ENCODE measurements at regions of chr18 and their contacts with region 1.

Region 1: DNA sequence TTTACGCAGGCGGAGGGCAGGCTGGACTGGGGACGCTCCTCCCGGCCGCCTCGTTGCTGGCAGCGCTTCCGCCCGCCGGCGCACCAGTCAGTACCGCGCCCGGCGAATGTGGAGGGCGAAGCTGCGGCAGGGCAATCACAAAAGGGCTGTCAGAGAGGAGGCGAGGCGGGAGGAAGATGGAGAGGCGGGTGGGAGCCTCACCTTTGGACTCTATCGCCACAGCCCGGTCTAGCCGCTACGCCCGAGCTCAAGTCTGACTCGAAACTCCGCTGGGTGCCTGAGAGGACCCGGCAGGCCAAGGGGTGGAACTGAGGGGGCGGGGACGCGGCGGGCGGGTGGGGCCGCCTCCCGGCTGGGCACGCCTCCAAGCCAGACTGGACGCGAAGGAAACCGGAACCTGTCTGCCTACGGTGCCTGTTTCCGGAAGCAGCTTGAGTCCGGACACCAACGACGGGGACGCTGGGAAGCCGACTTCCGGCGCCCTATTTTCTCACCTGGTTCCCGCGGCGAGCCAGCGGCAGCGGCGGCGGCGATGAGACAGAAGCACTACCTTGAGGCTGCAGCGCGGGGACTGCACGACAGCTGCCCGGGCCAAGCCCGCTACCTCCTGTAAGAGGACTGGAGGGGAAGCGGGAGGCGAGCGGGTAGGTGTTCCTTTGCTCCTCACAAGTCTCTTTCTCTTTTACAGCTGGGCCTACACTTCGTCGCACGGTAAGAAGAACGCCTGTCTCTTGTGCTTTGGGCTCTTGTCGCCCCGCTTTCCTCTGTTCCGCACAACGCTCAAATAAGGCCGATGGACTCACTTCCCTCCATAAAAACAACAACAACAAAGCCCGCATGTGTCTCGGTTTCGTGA is at the start of gene RMP24:
- DNase-seq: peak; percentile 95
- H3K4me3 ChIP-seq: peak within 1 kb of the TSS; percentile 58 to 80 (median 73)
- H3K27ac ChIP-seq: peak within 1 kb of the TSS; percentile 79
- H3K4me1 ChIP-seq: peaks cover 44% of the 10 kb centered on the region
- H3K27me3 ChIP-seq: no peaks in the 10 kb centered on the region
- CTCF ChIP-seq: no peak

Region 2: DNA sequence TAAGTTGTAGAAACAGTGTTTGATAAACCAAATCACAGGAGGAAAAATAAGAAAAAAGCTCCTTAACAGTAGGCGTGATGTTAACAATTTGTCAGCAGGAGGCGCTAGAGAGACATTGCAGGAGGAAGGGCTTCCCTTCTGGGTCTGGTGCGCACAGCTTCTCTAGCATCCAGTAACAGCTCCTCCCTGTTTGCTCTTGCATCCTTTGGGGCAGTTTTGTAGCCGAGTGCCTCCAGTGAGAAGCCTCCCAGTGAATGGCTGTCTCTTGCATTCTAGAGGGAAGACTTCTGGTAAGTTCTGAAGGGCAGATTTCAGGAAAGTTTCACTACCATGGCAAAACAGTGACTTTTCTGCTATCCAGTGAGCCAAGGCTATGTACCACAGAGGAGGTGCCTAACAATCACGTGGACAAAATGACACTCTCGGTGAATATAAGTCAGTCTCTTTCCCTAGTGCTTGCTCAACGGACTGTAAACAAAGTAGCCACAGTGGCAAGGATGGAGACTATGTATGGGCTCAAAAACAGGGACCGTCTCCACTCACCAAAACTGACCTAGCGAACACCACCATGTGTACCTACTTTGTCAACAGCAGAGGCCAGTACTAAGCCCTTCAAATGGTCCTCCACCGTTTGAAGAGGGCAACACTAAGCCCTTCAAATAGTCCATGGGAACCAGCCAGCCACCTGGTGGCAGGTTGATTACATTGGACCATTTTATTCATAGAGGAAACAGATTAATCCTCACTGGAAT is 585.6 kb before region 1 on chr18:
- CTCF ChIA-PET with region 1: no interaction called
- dilution Hi-C with region 1: no loop called
- in situ Hi-C with region 1: no loop called
- intact Hi-C with region 1: loop called (anchors 5 kb)
- DNase-seq: peak; percentile 61
- H3K4me3 ChIP-seq: no peak overlapping the region
- H3K27ac ChIP-seq: no peak overlapping the region
- H3K4me1 ChIP-seq: no peaks in the 10 kb centered on the region
- H3K27me3 ChIP-seq: no peaks in the 10 kb centered on the region
- CTCF ChIP-seq: peak; percentile 92 to 96

Region 3: DNA sequence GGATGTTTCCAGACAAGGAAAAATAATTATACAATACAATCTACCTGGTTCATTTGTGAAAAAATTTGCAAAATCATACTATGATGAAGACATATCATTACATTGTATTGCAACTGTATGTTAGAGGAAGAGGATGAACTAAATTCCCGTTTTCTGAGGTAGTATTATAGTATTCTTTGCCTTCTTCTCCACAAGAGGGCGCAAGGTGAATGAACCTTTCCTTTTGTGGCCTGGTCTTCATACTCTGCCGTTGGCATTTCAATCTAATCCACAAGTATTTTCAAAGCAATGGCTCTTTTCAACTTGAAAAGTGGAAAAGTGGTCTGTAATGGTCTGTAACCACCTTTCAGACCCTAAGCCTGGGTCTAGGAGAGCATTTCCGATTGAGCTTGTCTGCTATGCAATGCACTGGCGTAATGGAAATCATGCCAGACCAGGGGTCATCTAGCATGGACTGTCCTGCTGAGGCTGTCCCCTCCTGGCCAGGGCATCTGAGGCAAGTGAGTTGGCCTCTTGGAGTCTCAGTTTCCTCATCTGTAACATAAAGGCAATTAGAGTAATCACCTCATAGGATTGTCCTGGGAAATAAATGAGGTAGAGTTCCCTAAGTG is 564.4 kb before region 1 on chr18:
- CTCF ChIA-PET with region 1: no interaction called
- dilution Hi-C with region 1: no loop called
- in situ Hi-C with region 1: loop called in 1 of 2 experiments (anchors 25 kb)
- intact Hi-C with region 1: no loop called
- DNase-seq: peak; percentile 66
- H3K4me3 ChIP-seq: no peak overlapping the region
- H3K27ac ChIP-seq: no peak overlapping the region
- H3K4me1 ChIP-seq: peaks cover 40% of the 10 kb centered on the region
- H3K27me3 ChIP-seq: no peaks in the 10 kb centered on the region
- CTCF ChIP-seq: peak; percentile 69 to 81

Region 4: GRCh38 chr18:35917044-35917443 is 55.4 kb before region 1 on chr18:
- CTCF ChIA-PET with region 1: no interaction called
- dilution Hi-C with region 1: no loop called
- in situ Hi-C with region 1: no loop called
- intact Hi-C with region 1: loop called (anchors 1 kb)
- DNase-seq: peak; percentile 12
- H3K4me3 ChIP-seq: no peak overlapping the region
- H3K27ac ChIP-seq: no peak overlapping the region
- H3K4me1 ChIP-seq: peaks cover 10% of the 10 kb centered on the region
- H3K27me3 ChIP-seq: no peaks in the 10 kb centered on the region
- CTCF ChIP-seq: peak; percentile 54 to 88

Region 5: DNA sequence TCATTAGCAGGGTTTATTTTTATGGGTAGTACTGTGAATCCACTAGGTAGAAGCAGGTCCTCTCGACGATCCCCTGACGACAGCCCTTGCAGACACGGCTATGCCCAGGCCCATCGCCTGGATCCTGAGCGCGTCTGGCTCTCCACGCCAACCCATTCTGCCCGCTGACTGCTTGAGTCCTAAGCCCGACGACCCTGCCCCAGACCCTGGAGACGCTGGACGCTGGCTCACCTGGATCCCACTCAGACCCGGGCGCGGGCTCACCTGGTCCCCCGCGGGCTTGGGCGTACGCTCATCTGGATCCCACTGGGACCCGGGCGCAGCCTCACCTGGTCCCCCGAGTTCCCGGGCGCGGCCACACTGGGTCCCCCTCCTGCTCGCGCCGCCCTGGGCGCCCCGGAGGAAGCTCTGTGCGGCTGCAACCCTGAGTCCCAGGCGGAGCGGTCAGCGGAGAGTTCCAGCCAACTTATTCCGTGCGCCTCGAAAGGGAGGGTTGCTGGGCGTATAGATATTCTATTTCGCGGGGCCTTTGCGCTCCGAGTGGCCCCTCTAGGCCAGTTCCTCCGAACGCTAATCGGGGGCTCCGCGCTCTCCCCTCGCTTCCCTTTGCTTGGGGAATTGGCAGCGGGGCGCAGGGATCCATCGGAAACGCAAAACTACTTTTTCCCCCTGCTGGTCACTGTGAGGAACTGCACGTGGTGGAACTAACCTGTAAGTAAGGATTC is 22.4 kb before region 1 on chr18:
- CTCF ChIA-PET with region 1: no interaction called
- dilution Hi-C with region 1: no loop called
- in situ Hi-C with region 1: no loop called
- intact Hi-C with region 1: loop called (anchors 2 kb)
- DNase-seq: peak; percentile 61
- H3K4me3 ChIP-seq: peak overlapping the region; percentile 60 to 87 (median 66)
- H3K27ac ChIP-seq: no peak overlapping the region
- H3K4me1 ChIP-seq: peaks cover 8% of the 10 kb centered on the region
- H3K27me3 ChIP-seq: no peaks in the 10 kb centered on the region
- CTCF ChIP-seq: peak; percentile 74 to 91

Region 6: GRCh38 chr18:36129300-36130038 is 157.0 kb after region 1 on chr18 and contains the starts of genes ELP2 and SLC39A6:
- CTCF ChIA-PET with region 1: no interaction called
- dilution Hi-C with region 1: no loop called
- in situ Hi-C with region 1: no loop called
- intact Hi-C with region 1: loop called (anchors 1 kb)
- DNase-seq: peak; percentile 92
- H3K4me3 ChIP-seq: peak within 1 kb of the TSS; percentile 66 to 96 (median 85)
- H3K27ac ChIP-seq: peak within 1 kb of the TSS; percentile 86
- H3K4me1 ChIP-seq: peaks cover 23% of the 10 kb centered on the region
- H3K27me3 ChIP-seq: no peaks in the 10 kb centered on the region
- CTCF ChIP-seq: peak in 1 of 2 donors; percentile 1
- total RNA-seq, gene ELP2: 88.6 to 91.4 TPM
- total RNA-seq, gene SLC39A6: 123 to 255 TPM

Region 7: DNA sequence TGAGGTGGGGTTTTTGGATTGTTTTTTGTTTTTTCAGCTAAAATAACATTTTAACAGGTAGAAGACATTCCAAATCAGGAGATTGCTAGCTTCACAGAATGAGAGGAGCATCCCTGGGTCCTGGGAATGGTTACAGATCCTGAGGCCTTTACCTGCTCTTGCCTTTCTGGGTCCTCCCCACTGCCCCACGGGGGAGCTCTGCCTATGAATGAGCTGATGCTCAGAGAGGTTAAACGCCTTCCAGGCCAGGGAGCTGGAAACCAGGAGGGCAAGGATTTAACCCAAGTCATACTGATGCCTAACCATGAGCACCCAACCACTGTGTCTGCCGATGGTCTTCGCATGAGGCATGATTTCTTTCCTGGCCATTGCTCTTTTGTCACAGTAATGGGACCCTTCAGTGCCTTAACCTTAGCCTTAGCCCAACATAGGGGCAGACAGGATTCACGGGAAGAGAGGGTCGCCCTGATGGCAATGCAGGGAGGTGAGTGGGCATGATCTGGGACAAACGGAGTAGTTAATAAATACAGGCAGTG is 231.0 kb after region 1 on chr18:
- CTCF ChIA-PET with region 1: no interaction called
- dilution Hi-C with region 1: no loop called
- in situ Hi-C with region 1: no loop called
- intact Hi-C with region 1: no loop called
- DNase-seq: no peak
- H3K4me3 ChIP-seq: no peak overlapping the region
- H3K27ac ChIP-seq: no peak overlapping the region
- H3K4me1 ChIP-seq: no peaks in the 10 kb centered on the region
- H3K27me3 ChIP-seq: no peaks in the 10 kb centered on the region
- CTCF ChIP-seq: no peak